Caco-2 (cell line): ENCODE measurements at regions of chr20 and their contacts with region 1.

Region 1: GRCh38 chr20:59207742-59208357 is 44.2 kb downstream of the ZNF831 start:
- DNase-seq: peak; percentile 63 to 69
- H3K4me3 ChIP-seq: no peak overlapping the region
- H3K4me3 Mint-ChIP-seq: no peak overlapping the region
- H3K27ac Mint-ChIP-seq: no peak overlapping the region
- H3K4me1 ChIP-seq: no peaks in the 10 kb centered on the region
- H3K4me1 Mint-ChIP-seq: no peaks in the 10 kb centered on the region
- H3K27me3 ChIP-seq: 0 out of 2 replicates have a peak, but pooled peaks cover 1% of the 10 kb centered on the region
- H3K27me3 Mint-ChIP-seq: peaks cover 34% of the 10 kb centered on the region
- CTCF ChIP-seq: peak; percentile 58 to 65

Region 2: DNA sequence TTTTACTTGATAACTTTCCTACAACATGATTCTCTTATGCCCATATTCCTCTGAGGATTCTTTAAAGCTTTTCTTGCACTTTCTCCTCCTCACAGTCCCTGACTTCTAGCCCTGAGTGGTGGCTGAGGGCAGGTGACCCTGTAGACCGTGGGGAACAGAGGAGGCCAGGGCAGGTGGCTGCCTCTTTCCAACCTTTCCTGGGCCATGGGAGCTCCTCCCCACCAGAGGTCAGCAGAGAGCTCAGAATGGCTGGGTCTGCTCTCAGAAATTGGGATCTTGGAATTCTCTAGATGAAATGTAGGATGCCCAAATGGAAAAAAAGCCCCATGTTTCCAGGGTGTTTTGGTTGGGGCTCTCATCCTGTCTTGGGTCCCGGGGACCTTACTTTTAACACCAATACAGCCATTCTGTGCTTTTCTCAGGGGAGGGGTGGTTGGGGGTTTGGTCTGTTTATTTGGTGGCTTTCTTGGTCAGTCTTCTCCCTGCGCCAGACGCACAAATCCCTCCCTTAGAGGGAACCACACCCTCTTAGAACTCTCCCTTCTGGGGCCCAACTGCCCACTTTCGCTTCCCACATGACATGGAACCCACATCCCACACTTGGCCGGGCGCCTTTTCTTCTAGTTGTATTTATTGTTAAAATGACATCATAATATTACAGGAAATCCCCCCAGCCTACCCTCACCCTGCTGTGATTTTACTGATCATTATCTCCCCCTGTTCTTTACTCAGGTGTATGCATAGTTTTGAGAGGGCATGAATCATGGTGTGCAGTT is 337.4 kb before region 1 on chr20:
- CTCF ChIA-PET with region 1: interaction called, 3 read pairs
- POLR2A ChIA-PET with region 1: no interaction called
- intact Hi-C with region 1: loop called (anchors 5 kb)
- DNase-seq: peak; percentile 83 to 93
- H3K4me3 ChIP-seq: no peak overlapping the region
- H3K4me3 Mint-ChIP-seq: no peak overlapping the region
- H3K27ac Mint-ChIP-seq: no peak overlapping the region
- H3K4me1 ChIP-seq: no peaks in the 10 kb centered on the region
- H3K4me1 Mint-ChIP-seq: peaks cover 6% of the 10 kb centered on the region
- H3K27me3 ChIP-seq: no peaks in the 10 kb centered on the region
- H3K27me3 Mint-ChIP-seq: peaks cover 17% of the 10 kb centered on the region
- CTCF ChIP-seq: peak; percentile 98 to 100